Activated T-helper 1 cell treated with anti-CD3 and anti-CD28 coated beads, Interleukin-12 subunit alpha, Interleukin-12 subunit beta, Interleukin-2, Interleukin-4 antibody, amounts not matched to agents 30 ng/mL and 10 ng/mL and 1 ng/mL, durations not matched to agents 14 hours and 24 hours and 36 hours (primary cell): ENCODE measurements at regions of chrX and their contacts with region 1.

Region 1: DNA sequence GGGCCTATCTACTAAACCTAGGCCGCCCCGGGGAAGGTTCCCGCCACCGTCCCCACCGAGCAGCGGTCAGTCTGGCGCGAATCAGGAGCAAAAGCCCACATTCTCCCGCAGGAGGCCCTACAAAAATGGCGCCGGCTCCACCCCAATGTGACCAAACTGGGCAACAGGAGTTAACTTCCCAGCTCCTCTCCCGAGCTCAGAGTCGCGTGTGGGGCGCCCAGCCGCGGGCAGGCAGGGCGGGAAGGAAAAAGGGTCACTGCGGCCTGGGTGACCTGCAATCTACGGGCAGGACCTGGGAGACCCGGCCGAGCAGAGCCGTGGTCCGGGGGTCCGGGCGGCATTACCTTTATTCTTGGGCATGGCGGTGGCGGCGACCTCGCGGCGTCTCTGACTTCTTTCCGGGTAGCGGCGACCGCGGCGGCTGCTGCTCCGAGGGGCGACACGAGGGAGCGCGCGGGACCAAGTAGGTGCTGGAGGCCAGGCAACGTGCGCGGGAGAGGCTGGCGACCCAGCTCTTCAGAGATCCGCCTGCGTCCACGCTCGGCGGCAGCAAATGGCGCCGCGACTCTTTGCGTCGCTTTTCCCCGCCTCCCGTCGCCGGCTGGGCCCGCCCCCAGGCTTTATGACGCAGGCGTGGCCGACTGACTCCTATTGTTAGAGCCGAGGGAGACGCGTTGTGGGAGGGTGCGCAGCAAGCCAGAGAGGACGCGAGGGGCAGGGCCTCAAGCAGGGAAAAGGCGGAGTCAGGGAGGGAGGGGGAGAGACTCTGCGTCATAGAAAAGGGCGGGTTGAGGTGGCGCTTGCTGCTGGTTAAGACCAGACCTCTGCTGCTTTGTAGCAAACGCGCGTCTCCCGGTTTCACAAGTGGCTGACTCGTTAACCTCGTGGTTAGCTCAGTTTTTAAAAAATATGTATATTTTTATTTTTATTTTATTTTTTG is at the start of gene EIF1AX:
- DNase-seq: peak; percentile 93
- H3K4me3 Mint-ChIP-seq: peak within 1 kb of the TSS; percentile 90
- H3K27ac Mint-ChIP-seq: peak within 1 kb of the TSS; percentile 84
- H3K4me1 Mint-ChIP-seq: peaks cover 29% of the 10 kb centered on the region
- H3K27me3 Mint-ChIP-seq: no peaks in the 10 kb centered on the region
- total RNA-seq, gene EIF1AX: 107 TPM in 2 replicates

Region 2: DNA sequence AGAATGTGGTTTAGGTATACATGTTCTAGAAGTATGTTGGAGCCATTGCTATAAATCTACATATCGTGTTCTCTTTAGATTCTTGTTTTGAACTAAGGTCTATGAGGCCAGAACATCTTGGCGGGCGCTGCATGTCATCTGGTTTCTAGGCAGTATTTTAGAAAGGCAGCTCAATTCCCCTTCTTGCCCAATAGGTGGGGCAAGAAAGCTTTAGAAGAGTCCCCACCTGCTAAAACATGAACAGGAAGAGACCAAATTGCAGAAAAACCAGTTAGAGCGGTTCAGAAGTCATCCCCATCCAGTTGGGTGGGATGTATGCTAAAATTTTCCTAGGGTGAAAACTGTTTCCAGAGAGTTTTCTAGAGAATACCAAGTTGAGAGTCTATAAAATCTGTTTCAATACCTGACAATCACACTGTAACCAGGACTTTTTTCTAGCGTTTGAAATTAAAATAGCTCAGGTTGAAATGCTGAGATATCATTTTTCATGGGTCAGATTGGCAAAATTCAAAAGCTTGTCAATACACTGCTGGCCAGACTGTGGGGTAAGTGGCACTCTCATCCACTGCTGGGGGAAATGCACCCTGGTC is 236.7 kb before region 1 on chrX:
- intact Hi-C with region 1: loop called (anchors 5 kb)
- DNase-seq: no peak
- H3K4me3 Mint-ChIP-seq: no peak overlapping the region
- H3K27ac Mint-ChIP-seq: no peak overlapping the region
- H3K4me1 Mint-ChIP-seq: peaks cover 19% of the 10 kb centered on the region
- H3K27me3 Mint-ChIP-seq: no peaks in the 10 kb centered on the region

Region 3: GRCh38 chrX:19964017-19964710 is 177.4 kb before region 1 on chrX:
- intact Hi-C with region 1: no loop called
- DNase-seq: peak; percentile 13
- H3K4me3 Mint-ChIP-seq: no peak overlapping the region
- H3K27ac Mint-ChIP-seq: no peak overlapping the region
- H3K4me1 Mint-ChIP-seq: peaks cover 13% of the 10 kb centered on the region
- H3K27me3 Mint-ChIP-seq: no peaks in the 10 kb centered on the region

Region 4: DNA sequence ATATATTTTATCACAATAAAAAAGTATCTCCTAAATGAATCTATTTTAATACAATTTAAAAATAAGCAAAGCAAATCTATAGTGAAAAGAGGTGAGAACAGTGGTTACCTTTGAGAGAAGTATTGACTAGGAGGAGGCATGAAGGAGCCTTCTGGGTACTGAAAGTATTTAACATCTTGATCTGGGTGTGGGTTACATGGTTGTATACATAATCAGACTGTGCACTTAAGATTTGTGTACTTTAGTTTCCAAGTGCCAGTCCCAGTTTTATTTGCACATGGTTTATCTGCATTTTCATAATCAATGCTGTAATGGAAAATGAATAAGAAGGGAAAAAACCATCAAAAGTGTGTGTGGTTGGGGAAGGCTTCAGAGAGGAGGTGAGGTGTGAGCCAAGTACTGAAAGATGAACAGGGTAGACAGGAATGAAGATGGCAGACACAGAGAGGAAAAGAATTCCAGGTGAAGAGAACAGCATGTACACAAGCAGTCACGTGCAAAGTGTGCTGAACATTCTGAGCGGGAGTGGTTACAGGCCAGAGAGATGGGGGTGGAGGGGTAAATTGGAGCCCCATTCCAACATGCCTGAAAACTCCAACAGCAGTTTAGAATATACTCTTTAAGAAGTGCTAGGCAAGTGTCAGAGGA is 39.5 kb before region 1 on chrX:
- intact Hi-C with region 1: no loop called
- DNase-seq: no peak
- H3K4me3 Mint-ChIP-seq: no peak overlapping the region
- H3K27ac Mint-ChIP-seq: peak overlapping the region; percentile 59
- H3K4me1 Mint-ChIP-seq: peaks cover 6% of the 10 kb centered on the region
- H3K27me3 Mint-ChIP-seq: no peaks in the 10 kb centered on the region

Region 5: DNA sequence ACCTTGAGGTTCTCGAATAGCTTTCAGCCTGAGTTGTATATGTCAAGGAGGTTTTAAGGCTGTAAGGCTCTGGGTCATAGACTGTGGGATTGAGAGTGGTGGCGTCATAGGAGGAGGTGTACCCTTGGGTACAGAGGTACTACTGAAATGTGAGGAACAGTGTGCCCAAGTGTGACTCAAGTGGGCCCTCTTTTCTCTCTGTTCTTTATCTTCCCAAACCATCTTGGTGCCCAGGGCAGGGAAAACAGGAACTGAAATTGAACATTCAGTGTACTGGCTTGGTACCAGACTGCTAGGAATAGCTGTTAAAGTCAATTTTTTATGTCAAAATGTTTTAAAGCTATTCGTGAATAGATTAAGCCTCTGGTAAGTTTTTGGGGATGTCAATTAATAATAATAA is 261.4 kb after region 1 on chrX:
- intact Hi-C with region 1: no loop called
- DNase-seq: no peak
- H3K4me3 Mint-ChIP-seq: no peak overlapping the region
- H3K27ac Mint-ChIP-seq: no peak overlapping the region
- H3K4me1 Mint-ChIP-seq: peaks cover 16% of the 10 kb centered on the region
- H3K27me3 Mint-ChIP-seq: no peaks in the 10 kb centered on the region